Transverse colon (tissue), 4 donors: ENCODE measurements at regions of chr17 and their contacts with region 1.

Region 1: DNA sequence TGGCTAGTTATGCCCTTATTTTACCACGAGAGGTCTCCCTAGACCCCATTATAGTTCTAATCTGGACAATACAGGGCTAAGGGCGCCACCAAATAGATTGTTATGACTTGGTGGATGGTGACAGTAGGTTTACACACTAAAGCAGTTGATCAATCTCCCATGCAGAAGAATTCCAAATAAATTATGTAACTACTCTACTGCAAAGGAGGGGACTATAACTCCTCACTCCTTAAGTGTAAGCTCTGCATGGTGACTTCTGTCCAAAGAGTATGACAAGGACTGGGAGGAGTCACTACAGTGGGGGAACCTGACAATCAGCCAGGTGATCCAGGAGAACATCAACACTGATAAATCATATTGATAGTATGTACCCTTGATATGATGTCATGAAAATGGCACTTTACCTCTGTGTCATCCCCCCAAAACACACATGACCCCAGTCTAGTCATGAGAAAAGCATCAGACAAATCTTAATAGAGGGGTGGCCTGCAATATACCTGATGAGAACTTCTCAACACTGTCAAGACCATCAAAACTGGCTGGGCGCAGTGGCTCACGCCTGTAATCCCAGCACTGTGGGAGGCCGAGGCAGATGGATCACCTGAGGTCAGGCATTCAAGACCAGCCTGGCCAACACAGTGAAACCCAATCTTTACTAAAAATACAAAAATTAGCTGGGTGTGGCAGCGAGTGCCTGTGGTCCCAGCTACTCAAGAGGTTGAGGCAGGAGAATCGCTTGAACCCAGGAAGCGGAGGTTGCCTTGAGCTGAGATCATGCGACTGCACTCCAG is 20.1 kb upstream of the YPEL2 start:
- DNase-seq: peak; percentile 32
- H3K4me3 ChIP-seq: no peak overlapping the region
- H3K27ac ChIP-seq: no peak overlapping the region
- H3K4me1 ChIP-seq: peaks cover 0 to 8% (median 0%) of the 10 kb centered on the region in 4 donors
- H3K27me3 ChIP-seq: no peaks in the 10 kb centered on the region
- CTCF ChIP-seq: peak; percentile 75 to 88 (median 82)
- EP300 ChIP-seq: no peak
- POLR2A ChIP-seq: no peak

Region 2: GRCh38 chr17:59366773-59367657 is 55.7 kb after region 1 on chr17:
- in situ Hi-C with region 1: no loop called
- intact Hi-C with region 1: loop called (anchors 2 kb)
- DNase-seq: peak; percentile 77
- H3K4me3 ChIP-seq: peak overlapping the region in 1 of 4 donors; percentile 10
- H3K27ac ChIP-seq: peak overlapping the region; percentile 83 to 93 (median 88)
- H3K4me1 ChIP-seq: peaks cover 78 to 100% (median 82%) of the 10 kb centered on the region in 4 donors
- H3K27me3 ChIP-seq: no peaks in the 10 kb centered on the region
- CTCF ChIP-seq: no peak
- EP300 ChIP-seq: no peak
- POLR2A ChIP-seq: no peak

Region 3: DNA sequence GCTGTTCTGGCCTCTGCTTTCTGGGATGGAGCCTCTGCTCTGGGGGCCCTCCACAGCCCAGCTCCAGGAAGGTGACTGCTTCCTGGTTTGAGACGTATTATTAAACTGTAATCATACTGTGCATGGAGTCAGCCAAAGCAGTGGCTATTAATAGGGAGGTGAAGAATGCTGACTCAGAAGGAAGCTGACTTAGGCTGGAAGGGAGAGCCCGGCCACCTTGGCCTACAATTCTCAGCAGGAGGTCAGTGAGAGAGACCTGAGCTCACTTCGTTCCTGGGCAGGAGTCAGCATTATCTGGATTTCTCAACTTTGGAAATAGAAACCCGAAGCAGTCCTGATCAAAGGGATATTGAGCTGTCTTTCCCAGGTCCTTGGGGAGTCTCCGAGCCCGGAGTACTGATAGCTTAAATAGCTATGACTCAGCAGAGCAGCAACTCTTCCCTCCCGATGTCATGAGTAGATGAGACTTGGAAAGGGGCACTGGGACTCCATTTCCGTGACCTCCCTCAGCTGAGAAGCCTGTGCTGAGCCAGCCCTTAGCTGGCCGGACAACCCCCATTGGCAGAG is 111.9 kb after region 1 on chr17:
- in situ Hi-C with region 1: no loop called
- intact Hi-C with region 1: no loop called
- DNase-seq: no peak
- H3K4me3 ChIP-seq: no peak overlapping the region
- H3K27ac ChIP-seq: peak overlapping the region in 3 of 4 donors; percentile 78 to 88 (median 85)
- H3K4me1 ChIP-seq: peaks cover 8 to 34% (median 18%) of the 10 kb centered on the region in 4 donors
- H3K27me3 ChIP-seq: no peaks in the 10 kb centered on the region
- CTCF ChIP-seq: no peak
- EP300 ChIP-seq: no peak
- POLR2A ChIP-seq: no peak

Region 4: DNA sequence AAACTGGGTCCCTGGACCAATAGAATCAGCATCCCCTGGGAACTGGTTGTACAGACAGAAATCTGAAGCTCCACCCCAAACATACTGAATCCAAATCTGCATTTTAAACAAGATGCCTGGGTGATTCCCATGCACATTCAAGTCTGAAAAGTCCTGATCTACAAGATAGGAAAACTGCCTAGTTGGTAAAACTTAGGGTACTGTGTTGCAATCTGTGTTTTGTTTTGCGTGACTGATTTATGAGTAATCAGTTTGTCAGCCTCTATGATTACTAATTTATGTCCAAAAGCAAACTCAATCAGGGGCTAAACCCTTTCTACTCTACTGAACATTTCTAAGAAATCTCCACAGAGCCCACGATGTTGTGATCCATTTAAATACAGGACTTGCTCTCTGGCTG is 123.9 kb after region 1 on chr17:
- in situ Hi-C with region 1: loop called in 1 of 4 experiments (anchors 5 kb)
- intact Hi-C with region 1: loop called (anchors 2 kb)
- DNase-seq: no peak
- H3K4me3 ChIP-seq: no peak overlapping the region
- H3K27ac ChIP-seq: peak overlapping the region in 1 of 4 donors; percentile 26
- H3K4me1 ChIP-seq: peaks cover 0 to 13% (median 5%) of the 10 kb centered on the region in 4 donors
- H3K27me3 ChIP-seq: no peaks in the 10 kb centered on the region
- CTCF ChIP-seq: no peak
- EP300 ChIP-seq: no peak
- POLR2A ChIP-seq: no peak

Region 5: DNA sequence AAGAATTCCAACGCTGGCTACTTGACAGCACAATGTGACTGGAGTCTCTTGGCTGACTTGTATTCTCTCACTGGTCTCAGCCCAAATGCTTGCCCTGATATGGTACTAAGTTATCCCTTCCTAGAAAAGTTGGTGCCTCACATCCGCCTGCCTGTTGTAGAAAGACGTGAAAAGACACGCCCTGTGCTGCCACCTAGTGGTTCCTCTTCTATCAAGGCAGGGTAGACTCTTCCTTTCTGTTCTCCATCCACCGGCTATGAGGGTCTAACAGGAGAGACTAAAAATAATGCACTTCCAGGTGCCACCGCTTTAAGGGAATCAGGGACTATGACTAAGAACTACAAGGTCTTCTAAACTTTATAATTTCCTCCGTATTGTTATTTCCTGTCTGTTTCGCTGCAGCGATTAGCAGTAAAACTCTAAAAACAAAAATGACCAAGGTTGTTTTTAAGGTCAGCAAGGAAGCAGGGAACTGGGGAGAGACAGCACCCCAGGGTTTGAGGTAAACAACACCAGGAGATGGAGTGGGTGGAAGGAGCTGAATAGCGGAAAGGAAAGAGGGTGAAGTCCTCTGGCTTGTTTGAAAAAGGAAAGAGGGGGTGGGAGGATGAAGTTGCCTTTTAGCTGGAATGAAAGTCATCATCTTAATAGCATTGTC is 129.6 kb after region 1 on chr17:
- in situ Hi-C with region 1: loop called in 1 of 4 experiments (anchors 5 kb)
- intact Hi-C with region 1: loop called (anchors 2 kb)
- DNase-seq: peak; percentile 92
- H3K4me3 ChIP-seq: no peak overlapping the region
- H3K27ac ChIP-seq: peak overlapping the region; percentile 38 to 51 (median 48)
- H3K4me1 ChIP-seq: peaks cover 0 to 24% (median 12%) of the 10 kb centered on the region in 4 donors
- H3K27me3 ChIP-seq: no peaks in the 10 kb centered on the region
- CTCF ChIP-seq: peak; percentile 77 to 93 (median 87)
- EP300 ChIP-seq: no peak
- POLR2A ChIP-seq: no peak

Region 6: DNA sequence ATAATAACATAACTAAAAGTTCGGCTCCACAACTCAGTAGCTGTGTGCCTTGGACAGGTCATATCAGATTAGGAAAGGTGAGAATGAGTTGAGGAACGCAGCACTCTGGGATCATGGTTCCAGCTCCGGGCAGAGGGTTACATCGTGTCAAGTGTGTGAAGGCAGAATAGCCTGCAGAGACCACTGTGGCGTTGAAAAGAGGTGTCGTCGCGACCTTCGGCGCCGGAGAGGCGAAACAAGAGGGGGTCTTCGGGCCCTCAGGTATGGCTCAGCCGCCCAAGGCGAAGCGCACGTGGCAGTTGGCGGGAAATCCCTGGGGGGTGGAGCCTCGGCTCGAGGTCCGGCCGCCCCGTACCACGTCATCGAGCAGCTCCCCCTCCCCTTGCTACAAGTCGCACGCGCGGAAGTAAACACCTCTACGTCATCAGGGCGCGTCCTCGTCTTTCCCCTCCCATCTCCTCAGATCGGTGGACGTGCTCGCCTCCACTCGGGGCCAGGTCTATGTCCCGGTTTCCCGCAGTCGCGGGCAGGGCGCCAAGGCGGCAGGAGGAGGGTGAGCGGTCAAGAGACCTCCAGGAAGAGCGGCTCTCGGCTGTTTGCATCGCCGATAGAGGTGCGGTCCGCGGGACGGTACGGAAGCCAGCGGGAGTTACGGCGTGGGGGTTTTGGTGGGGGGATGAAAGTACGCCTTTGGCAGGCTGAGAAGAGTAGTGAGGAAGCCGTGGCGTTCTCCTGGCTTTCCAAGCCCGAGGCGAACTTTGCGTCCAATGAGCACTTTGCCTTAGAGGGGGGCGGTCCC is 254.0 kb after region 1 on chr17 and contains the start of gene DHX40:
- in situ Hi-C with region 1: loop called in 3 of 4 experiments (anchors 25 kb)
- intact Hi-C with region 1: no loop called
- DNase-seq: peak; percentile 95
- H3K4me3 ChIP-seq: peak within 1 kb of the TSS; percentile 47 to 73 (median 66)
- H3K27ac ChIP-seq: peak within 1 kb of the TSS; percentile 73 to 87 (median 82)
- H3K4me1 ChIP-seq: peaks cover 3 to 11% (median 10%) of the 10 kb centered on the region in 4 donors
- H3K27me3 ChIP-seq: no peaks in the 10 kb centered on the region
- CTCF ChIP-seq: no peak
- EP300 ChIP-seq: no peak
- POLR2A ChIP-seq: peak; percentile 70
- total RNA-seq, gene DHX40: 6.0 to 30.2 (median 15.2) TPM

Region 7: DNA sequence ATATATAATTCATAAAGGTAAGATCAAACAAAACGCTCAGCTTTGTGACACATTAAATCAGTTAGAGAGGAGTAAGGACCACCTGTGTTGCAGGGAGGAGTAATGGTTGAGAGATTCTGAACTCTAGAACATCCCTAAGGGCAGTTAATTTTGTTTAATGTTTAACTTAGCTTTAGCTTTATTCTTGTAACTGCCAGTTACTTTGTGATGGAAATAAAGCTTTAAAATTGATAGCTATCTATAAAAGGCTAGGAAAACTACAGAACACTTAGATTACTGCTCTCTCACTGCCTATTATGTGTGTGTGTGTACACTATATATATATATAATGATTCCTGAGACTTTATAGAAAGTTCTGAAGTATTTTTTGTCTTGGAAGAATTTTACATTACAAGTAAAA is 358.1 kb after region 1 on chr17:
- in situ Hi-C with region 1: no loop called
- intact Hi-C with region 1: no loop called
- DNase-seq: no peak
- H3K4me3 ChIP-seq: no peak overlapping the region
- H3K27ac ChIP-seq: peak overlapping the region; percentile 66 to 85 (median 70)
- H3K4me1 ChIP-seq: peaks cover 6 to 87% (median 59%) of the 10 kb centered on the region in 4 donors
- H3K27me3 ChIP-seq: no peaks in the 10 kb centered on the region
- CTCF ChIP-seq: no peak
- EP300 ChIP-seq: no peak
- POLR2A ChIP-seq: no peak